HEK293T (cell line): ENCODE measurements at regions of chr6 and their contacts with region 1.

Region 1: GRCh38 chr6:8983188-8983688 is 547.9 kb upstream of the SLC35B3 start:
- DNase-seq: peak; percentile 81

Region 2: DNA sequence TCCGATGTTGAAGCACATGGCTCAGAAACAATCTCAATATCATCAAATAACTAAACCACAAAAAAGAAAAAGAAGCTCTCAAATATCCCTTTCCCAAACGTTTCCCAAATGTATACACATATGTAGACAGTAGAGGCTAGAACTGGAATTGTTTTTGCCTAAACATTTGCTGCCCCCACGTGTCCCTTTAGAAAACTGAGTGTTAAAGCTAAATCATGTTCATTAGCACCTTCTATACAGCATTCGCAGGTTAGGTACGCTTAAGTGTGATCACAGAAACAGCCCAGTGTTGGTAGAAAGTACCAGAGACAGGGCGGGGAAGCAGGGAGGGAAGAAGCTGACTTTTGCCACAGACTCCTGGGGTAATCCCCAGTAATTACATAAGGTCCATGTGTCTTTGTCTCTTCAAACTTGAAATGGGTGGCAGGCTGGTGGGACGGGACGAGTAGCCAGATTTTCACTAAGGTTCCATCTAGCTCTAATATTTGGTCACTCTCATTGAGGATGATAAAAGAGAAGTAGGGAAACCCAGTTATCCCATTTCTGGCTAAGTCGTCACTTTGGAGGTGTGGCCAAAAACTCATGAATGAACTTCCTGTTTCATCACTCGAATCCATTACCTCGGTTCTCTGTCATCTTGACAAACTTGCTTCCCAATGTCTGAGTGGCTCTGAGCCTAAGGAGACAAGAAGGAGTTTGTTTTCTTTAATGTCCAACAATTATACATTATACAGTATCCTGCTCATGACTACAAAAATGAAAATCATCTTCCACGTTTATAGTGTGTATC is 1446.6 kb after region 1 on chr6:
- CTCF ChIA-PET with region 1: interaction called, 18 read pairs
- POLR2A ChIA-PET with region 1: no interaction called
- DNase-seq: no peak